ENCODE measurements at regions of chr1 and their contacts with region 1.

Region 1: GRCh38 chr1:179882243-179883039 is at the start of gene TOR1AIP1:
- DNase-seq: peak; percentile 97 to 98
- ATAC-seq: peak; percentile 94 to 98 (median 96)
- H3K4me3 ChIP-seq: peak within 1 kb of the TSS; percentile 64 to 90 (median 79)
- H3K27ac ChIP-seq: peak within 1 kb of the TSS; percentile 95 to 100 (median 99)
- H3K4me1 ChIP-seq: peaks cover 3 to 62% (median 57%) of the 10 kb centered on the region in 9 donors
- H3K27me3 ChIP-seq: no peaks in the 10 kb centered on the region
- CTCF ChIP-seq: peak; percentile 27 to 62 (median 40)
- total RNA-seq, gene TOR1AIP1: 31.6 to 50.3 (median 46.0) TPM

Region 2: DNA sequence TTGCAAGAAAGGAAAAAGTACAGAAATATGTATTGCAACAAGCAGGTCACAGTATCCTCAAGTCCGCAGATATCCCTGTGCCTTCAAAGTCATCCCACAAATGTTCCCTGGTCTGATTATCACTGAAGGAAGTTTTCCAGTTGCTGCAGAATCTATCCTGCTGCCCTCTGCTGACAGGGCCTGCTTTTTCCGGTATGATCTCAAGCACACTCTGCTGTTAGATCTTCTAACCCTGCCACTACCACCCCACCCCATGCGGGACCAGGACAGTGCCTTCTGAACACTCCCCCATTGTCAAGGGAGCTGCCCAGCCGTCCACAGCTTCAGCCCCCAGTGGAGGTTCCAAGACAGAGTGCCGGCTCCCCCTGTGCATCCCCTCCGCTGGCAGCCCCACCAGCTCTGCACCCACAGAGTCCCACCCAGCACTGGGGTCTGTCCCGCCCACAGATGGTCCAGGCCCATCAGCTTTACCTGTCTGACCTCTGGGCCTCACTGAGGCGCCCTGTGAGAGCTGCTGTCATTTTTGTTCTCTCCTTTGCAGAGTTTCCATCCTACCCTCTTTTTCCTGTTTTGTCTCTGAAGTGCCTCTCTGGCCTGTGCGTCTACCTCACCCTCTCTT is 111.4 kb before region 1 on chr1:
- intact Hi-C with region 1: no loop called
- DNase-seq: no peak
- ATAC-seq: no peak
- H3K4me3 ChIP-seq: no peak overlapping the region
- H3K27ac ChIP-seq: no peak overlapping the region
- H3K4me1 ChIP-seq: peaks cover 0 to 5% (median 0%) of the 10 kb centered on the region in 9 donors
- H3K27me3 ChIP-seq: no peaks in the 10 kb centered on the region
- CTCF ChIP-seq: peak in 5 of 9 donors; percentile 8 to 22 (median 15)

Region 3: GRCh38 chr1:179816196-179816960 is 66.1 kb before region 1 on chr1:
- intact Hi-C with region 1: loop called in 1 of 10 experiments (anchors 5 kb)
- DNase-seq: peak; percentile 65 to 66
- ATAC-seq: peak; percentile 4 to 62 (median 32)
- H3K4me3 ChIP-seq: peak overlapping the region in 4 of 10 donors; percentile 2 to 51 (median 46)
- H3K27ac ChIP-seq: peak overlapping the region in 9 of 10 donors; percentile 8 to 75 (median 53)
- H3K4me1 ChIP-seq: peaks cover 5 to 50% (median 35%) of the 10 kb centered on the region in 9 donors
- H3K27me3 ChIP-seq: peaks cover 0 to 13% (median 4%) of the 10 kb centered on the region in 7 donors
- CTCF ChIP-seq: no peak

Region 4: GRCh38 chr1:179840107-179840506 is 42.3 kb before region 1 on chr1:
- intact Hi-C with region 1: no loop called
- DNase-seq: no peak
- ATAC-seq: no peak
- H3K4me3 ChIP-seq: no peak overlapping the region
- H3K27ac ChIP-seq: no peak overlapping the region
- H3K4me1 ChIP-seq: no peaks in the 10 kb centered on the region
- H3K27me3 ChIP-seq: no peaks in the 10 kb centered on the region
- CTCF ChIP-seq: no peak

Region 5: GRCh38 chr1:179954493-179955297 is 72.3 kb after region 1 on chr1 and contains the start of gene CEP350:
- intact Hi-C with region 1: loop called in 6 of 10 experiments (anchors 1 to 5 kb)
- DNase-seq: peak; percentile 98 to 99
- ATAC-seq: peak; percentile 98 to 99 (median 99)
- H3K4me3 ChIP-seq: peak within 1 kb of the TSS; percentile 72 to 99 (median 96)
- H3K27ac ChIP-seq: peak within 1 kb of the TSS; percentile 93 to 99 (median 96)
- H3K4me1 ChIP-seq: peaks cover 8 to 62% (median 34%) of the 10 kb centered on the region in 9 donors
- H3K27me3 ChIP-seq: no peaks in the 10 kb centered on the region
- CTCF ChIP-seq: no peak
- total RNA-seq, gene CEP350: 23.2 to 46.3 (median 39.0) TPM

Region 6: DNA sequence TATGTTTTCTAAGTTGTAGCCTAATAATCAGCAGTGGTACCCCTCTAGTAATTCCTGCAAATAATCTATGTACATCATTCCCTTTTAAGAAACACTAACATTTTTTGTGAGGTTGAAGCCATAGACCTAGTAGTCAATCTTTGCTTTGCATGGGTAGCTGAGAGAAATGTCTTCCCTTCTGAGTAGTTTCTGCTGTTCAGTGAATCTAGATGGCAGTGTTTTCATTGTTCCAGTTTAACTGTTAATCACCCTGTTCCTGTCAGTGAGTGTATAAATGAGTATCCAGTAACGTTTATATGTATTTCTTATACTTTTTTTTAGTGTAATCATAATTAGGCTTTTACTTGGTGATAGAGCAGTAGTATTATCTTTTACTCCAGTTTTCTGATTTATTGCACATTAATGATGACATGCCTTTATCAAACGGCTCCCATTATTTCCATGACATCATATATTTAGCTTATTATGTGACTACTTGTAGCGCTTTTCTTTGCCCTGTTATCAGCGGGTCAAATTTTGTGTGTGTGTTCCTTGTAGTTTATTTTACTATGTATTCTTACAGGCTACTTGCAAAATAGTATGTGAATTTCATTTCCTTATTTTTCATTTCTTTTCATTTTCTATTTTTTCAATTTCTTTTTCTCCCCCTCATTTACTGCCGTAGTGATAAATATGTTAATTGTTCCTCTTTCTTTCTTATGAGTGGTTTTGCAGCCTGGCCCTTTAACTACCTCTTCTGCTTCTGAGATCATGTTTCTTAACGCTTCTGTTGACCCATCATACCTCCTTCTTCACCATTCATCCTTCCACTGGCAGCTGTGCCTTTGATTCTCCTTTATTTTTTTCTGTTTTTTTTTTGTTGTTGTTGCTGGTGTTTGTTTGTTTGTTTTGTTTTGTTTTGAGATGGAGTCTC is 91.0 kb after region 1 on chr1:
- intact Hi-C with region 1: no loop called
- DNase-seq: no peak
- ATAC-seq: no peak
- H3K4me3 ChIP-seq: no peak overlapping the region
- H3K27ac ChIP-seq: no peak overlapping the region
- H3K4me1 ChIP-seq: peaks cover 9 to 81% (median 63%) of the 10 kb centered on the region in 9 donors
- H3K27me3 ChIP-seq: no peaks in the 10 kb centered on the region
- CTCF ChIP-seq: no peak

Region 7: GRCh38 chr1:180131510-180131909 is 249.1 kb after region 1 on chr1:
- intact Hi-C with region 1: no loop called
- DNase-seq: no peak
- ATAC-seq: peak in 2 of 8 donors; percentile 25 to 31
- H3K4me3 ChIP-seq: no peak overlapping the region
- H3K27ac ChIP-seq: no peak overlapping the region
- H3K4me1 ChIP-seq: peaks cover 0 to 7% (median 0%) of the 10 kb centered on the region in 9 donors
- H3K27me3 ChIP-seq: peaks cover 0 to 4% (median 0%) of the 10 kb centered on the region in 7 donors
- CTCF ChIP-seq: no peak

Measured in heart right ventricle (tissue), 16 donors.